Endothelial cell of umbilical vein (primary cell): ENCODE measurements at regions of chr1 and their contacts with region 1.

Region 1: DNA sequence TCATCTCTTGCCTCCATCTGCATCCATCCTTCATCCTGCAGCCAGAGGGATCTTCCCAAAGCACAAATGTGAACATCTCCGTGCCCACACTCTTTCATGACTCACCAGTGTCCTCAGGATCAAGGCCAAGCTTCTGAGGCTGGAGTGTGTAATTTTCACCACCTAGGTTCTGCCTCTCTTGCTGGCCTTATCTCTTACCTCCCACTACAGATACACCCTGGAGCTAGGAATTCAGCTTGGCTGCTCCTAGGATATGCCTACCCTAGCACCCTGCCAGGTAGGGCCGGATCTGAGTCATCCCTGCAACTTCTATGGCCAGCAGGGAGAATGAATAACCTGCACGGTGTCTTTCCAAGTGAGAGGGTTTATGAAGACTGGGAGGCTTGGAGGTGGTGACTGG is 208.7 kb upstream of the CSF3R start:
- DNase-seq: no peak
- H3K4me3 ChIP-seq: no peak overlapping the region
- H3K27ac ChIP-seq: no peak overlapping the region
- H3K4me1 ChIP-seq: no peaks in the 10 kb centered on the region
- H3K27me3 ChIP-seq: no peaks in the 10 kb centered on the region
- CTCF ChIP-seq: no peak
- POLR2A ChIP-seq: no peak

Region 2: GRCh38 chr1:36673202-36673601 is 18.2 kb before region 1 on chr1:
- CTCF ChIA-PET with region 1: interaction called, 4 read pairs
- POLR2A ChIA-PET with region 1: interaction called, 11 read pairs
- dilution Hi-C with region 1: no loop called
- intact Hi-C with region 1: no loop called
- DNase-seq: no peak
- H3K4me3 ChIP-seq: no peak overlapping the region
- H3K27ac ChIP-seq: no peak overlapping the region
- H3K4me1 ChIP-seq: no peaks in the 10 kb centered on the region
- H3K27me3 ChIP-seq: peaks cover 0 to under 1% of the 10 kb centered on the region in 2 experiments
- CTCF ChIP-seq: no peak
- POLR2A ChIP-seq: no peak